CD8-positive, alpha-beta memory T cell (primary cell): ENCODE measurements at regions of chr16 and their contacts with region 1.

Region 1: DNA sequence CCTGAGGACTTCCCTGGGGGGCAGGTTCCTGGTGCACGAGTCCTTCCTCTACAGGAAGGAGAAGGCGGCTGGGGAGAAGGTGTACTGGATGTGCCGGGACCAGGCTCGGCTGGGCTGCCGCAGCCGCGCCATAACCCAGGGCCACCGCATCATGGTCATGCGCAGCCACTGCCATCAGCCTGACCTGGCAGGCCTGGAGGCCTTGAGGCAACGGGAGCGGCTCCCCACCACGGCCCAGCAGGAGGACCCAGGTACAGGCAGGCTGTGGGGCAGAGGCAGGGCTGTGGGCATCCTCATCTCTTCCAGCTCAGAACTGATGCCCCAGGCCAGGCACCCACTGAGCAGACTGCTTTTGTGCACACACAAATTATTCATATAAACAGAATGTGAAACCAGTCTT is 25.9 kb upstream of the KREMEN2 start:
- DNase-seq: no peak
- H3K4me3 ChIP-seq: no peak overlapping the region
- H3K4me3 Mint-ChIP-seq: no peak overlapping the region
- H3K27ac ChIP-seq: no peak overlapping the region
- H3K27ac Mint-ChIP-seq: no peak overlapping the region
- H3K4me1 ChIP-seq: no peaks in the 10 kb centered on the region
- H3K4me1 Mint-ChIP-seq: no peaks in the 10 kb centered on the region
- H3K27me3 ChIP-seq: no peaks in the 10 kb centered on the region
- H3K27me3 Mint-ChIP-seq: no peaks in the 10 kb centered on the region

Region 2: GRCh38 chr16:2926650-2927646 is 11.3 kb before region 1 on chr16:
- CTCF ChIA-PET with region 1: interaction called, 10 read pairs
- POLR2A ChIA-PET with region 1: no interaction called
- DNase-seq: peak; percentile 75 to 92 (median 82)
- H3K4me3 ChIP-seq: no peak overlapping the region
- H3K4me3 Mint-ChIP-seq: peak overlapping the region in 5 of 7 donors; percentile 2 to 33 (median 20)
- H3K27ac ChIP-seq: no peak overlapping the region
- H3K27ac Mint-ChIP-seq: peak overlapping the region; percentile 0 to 73 (median 26)
- H3K4me1 ChIP-seq: peaks cover 8% of the 10 kb centered on the region
- H3K4me1 Mint-ChIP-seq: peaks cover 12 to 14% (median 14%) of the 10 kb centered on the region in 3 donors
- H3K27me3 ChIP-seq: no peaks in the 10 kb centered on the region
- H3K27me3 Mint-ChIP-seq: peaks cover 0 to under 1% of the 10 kb centered on the region in 2 donors